ENCODE measurements at regions of chrX and their contacts with region 1.

Region 1: DNA sequence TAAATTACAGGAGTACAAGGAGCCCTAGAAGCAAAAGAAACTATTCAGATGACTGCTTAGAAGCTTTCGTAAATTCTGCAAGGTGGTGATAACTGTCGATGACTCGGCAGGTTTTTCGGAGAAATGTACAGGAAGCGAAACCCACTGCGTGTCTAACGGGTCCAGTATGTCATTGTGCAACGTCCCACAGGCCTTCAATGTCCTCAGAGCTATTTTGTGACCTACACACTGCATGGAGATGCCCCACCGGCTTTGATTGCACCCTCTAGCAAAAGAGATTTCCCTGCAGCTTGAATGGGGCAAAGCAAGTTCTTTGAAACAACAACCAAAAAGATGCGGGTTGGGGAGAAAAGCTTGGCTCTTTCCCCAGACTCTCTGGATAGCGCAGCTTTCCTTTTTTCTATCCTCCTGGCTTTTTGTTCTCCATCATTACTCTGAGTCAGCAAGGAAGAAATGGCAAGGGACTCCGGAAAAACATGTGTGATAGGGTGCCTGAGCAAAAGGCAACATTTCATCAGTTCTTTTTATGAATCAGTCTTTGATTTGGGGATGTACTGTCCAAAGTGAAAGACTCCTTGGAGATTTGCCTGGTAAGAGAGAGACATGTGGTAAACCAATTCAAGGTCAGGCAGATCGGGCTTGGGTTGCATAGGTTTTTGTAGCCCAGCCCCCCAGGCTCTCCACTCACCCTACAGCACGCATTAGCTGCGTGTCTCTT is 112.0 kb upstream of the TBL1X start:
- DNase-seq: peak; percentile 72
- H3K4me3 Mint-ChIP-seq: peak overlapping the region; percentile 20
- H3K27ac Mint-ChIP-seq: peak overlapping the region; percentile 80
- H3K4me1 Mint-ChIP-seq: peaks cover 35% of the 10 kb centered on the region
- H3K27me3 Mint-ChIP-seq: no peaks in the 10 kb centered on the region

Region 2: GRCh38 chrX:8971116-8971515 is 381.7 kb before region 1 on chrX:
- CTCF ChIA-PET with region 1: no interaction called
- POLR2A ChIA-PET with region 1: no interaction called
- intact Hi-C with region 1: loop called (anchors 1 kb)
- DNase-seq: no peak
- H3K4me3 Mint-ChIP-seq: no peak overlapping the region
- H3K27ac Mint-ChIP-seq: no peak overlapping the region
- H3K4me1 Mint-ChIP-seq: no peaks in the 10 kb centered on the region
- H3K27me3 Mint-ChIP-seq: no peaks in the 10 kb centered on the region

Region 3: GRCh38 chrX:9180623-9181022 is 172.2 kb before region 1 on chrX:
- CTCF ChIA-PET with region 1: no interaction called
- POLR2A ChIA-PET with region 1: no interaction called
- intact Hi-C with region 1: no loop called
- DNase-seq: no peak
- H3K4me3 Mint-ChIP-seq: no peak overlapping the region
- H3K27ac Mint-ChIP-seq: no peak overlapping the region
- H3K4me1 Mint-ChIP-seq: no peaks in the 10 kb centered on the region
- H3K27me3 Mint-ChIP-seq: no peaks in the 10 kb centered on the region

Region 4: DNA sequence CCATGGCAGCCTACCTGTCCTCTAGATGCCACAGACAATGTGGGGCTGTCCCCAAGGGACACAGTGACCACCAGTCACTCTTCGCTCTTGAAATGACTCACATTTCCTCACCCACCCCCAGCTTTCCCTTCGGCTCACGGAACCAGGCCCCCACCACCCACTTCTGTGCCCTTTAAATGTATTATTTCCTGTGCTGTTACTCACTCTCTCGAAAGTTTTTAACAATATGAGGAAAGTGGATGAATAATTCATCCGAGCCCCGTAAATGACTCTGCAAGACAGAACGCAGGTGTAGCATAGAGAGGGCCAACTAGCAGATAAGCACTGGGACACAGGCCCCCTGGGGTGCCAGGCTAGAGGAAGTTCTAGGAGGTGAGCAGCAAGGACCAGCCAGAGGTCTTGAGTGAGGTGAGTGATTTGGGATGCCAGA is 67.5 kb before region 1 on chrX:
- CTCF ChIA-PET with region 1: no interaction called
- POLR2A ChIA-PET with region 1: no interaction called
- intact Hi-C with region 1: loop called (anchors 1 kb)
- DNase-seq: peak; percentile 83
- H3K4me3 Mint-ChIP-seq: no peak overlapping the region
- H3K27ac Mint-ChIP-seq: peak overlapping the region; percentile 61
- H3K4me1 Mint-ChIP-seq: peaks cover 19% of the 10 kb centered on the region
- H3K27me3 Mint-ChIP-seq: no peaks in the 10 kb centered on the region

Region 5: DNA sequence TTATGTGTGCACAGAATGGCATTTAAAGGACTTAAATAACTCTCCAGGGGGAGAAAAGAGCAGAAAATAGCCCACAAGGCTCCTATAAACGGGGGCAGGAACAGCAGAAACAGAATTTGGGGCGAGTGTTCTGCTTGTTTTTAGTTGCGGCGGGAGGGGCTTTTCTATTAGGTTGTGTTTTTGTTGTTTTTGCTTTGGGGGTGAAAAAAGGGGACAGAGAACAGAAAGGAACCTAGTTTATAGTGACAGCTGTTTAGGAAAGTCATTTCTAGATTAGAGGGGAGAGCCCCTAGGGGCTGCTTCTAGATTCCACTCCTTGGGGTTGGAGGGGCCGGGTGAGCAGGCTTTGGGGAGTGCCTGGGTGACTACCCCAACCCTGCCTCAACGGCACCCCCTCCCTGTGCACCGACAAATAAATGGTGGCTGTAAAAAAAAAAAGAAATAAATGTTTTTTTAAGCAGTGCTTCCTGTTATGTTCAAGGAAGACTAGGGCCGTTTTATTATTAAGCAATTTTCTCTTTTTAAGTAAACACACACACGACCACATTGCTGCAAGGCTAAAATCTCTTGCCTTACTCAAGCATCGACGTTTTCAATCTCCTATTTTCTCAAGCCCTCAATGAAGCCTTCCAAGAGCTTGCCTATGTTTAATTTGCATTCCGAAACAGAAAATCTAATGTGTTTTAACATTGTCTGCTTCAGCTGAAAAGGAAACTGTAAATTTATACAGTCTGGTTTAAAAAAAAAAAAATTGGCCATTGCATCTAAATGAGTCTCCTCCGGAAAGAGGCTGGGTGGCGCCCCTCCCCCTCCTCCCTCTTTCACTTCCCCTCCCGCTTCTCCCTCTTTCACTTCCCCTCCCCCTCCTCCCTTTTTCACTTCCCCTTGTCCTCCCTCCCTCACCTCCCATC is 11.3 kb before region 1 on chrX:
- CTCF ChIA-PET with region 1: no interaction called
- POLR2A ChIA-PET with region 1: interaction called, 7 read pairs
- intact Hi-C with region 1: loop called (anchors 1 kb)
- DNase-seq: peak; percentile 76
- H3K4me3 Mint-ChIP-seq: peak overlapping the region; percentile 30
- H3K27ac Mint-ChIP-seq: peak overlapping the region; percentile 84
- H3K4me1 Mint-ChIP-seq: peaks cover 30% of the 10 kb centered on the region
- H3K27me3 Mint-ChIP-seq: no peaks in the 10 kb centered on the region

Region 6: DNA sequence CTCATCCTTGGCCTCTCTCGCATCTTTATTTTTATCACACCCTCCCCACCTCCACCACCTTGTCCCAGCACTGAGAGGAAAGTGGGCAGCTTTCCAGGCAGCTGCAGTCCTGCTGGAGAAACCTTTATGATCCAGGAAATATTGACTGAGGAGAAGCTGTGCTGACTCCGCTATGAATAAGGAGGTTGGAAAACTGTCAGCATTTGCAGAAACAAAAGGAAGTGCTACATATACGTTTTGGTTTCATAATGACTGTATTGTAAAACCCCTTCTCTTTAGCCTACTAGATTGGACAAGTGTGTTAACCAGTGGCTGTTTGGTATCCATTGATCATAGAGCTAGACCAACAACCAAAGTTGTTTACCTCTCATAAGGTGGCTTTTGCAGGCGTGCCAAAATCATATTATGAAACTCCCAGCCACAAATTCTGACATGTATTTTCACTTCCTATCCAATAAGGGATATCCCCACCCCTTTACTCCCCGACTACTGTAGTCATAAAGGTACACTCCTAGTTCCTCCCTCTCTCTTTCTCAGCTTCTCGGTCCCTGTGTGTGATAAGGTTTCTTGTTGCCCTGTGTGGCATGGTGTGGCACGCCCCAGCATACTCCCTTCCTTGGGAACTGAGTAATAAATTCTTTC is 324.4 kb after region 1 on chrX:
- CTCF ChIA-PET with region 1: no interaction called
- POLR2A ChIA-PET with region 1: no interaction called
- intact Hi-C with region 1: loop called (anchors 1 kb)
- DNase-seq: peak; percentile 43
- H3K4me3 Mint-ChIP-seq: no peak overlapping the region
- H3K27ac Mint-ChIP-seq: peak overlapping the region; percentile 14
- H3K4me1 Mint-ChIP-seq: peaks cover 20% of the 10 kb centered on the region
- H3K27me3 Mint-ChIP-seq: no peaks in the 10 kb centered on the region

Region 7: DNA sequence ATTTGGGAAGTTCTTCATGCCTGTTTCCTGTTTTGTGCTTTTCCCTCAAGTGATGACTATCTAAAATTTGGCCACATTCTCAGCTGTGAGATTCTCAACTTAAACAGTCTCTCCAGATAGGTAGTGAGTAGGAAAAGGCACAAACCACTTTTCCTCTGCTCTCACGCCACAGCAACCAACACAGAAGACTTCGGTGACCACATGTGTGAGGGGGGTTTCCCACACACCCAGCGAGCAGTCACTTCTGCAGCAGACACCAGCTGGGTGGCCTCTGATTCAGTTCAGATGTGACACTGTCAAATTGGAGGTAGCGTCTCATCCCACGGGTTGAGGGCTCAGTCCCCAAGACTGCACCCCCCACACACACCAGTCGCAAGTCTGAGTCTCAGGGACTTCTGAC is 589.2 kb after region 1 on chrX:
- CTCF ChIA-PET with region 1: no interaction called
- POLR2A ChIA-PET with region 1: no interaction called
- intact Hi-C with region 1: loop called (anchors 5 kb)
- DNase-seq: peak; percentile 83
- H3K4me3 Mint-ChIP-seq: no peak overlapping the region
- H3K27ac Mint-ChIP-seq: peak overlapping the region; percentile 57
- H3K4me1 Mint-ChIP-seq: peaks cover 14% of the 10 kb centered on the region
- H3K27me3 Mint-ChIP-seq: peaks cover 19% of the 10 kb centered on the region